ENCODE measurements at regions of chr14 and their contacts with region 1.

Region 1: GRCh38 chr14:57692671-57693070 is 173.2 kb downstream of the SLC35F4 start:
- DNase-seq: peak; percentile 56
- H3K4me3 ChIP-seq: no peak overlapping the region
- H3K27ac ChIP-seq: no peak overlapping the region
- H3K4me1 ChIP-seq: no peaks in the 10 kb centered on the region
- H3K27me3 ChIP-seq: peaks cover 8% of the 10 kb centered on the region

Region 2: GRCh38 chr14:57871459-57872080 is 178.9 kb after region 1 on chr14:
- in situ Hi-C with region 1: loop called (anchors 10 kb)
- DNase-seq: peak; percentile 86
- H3K4me3 ChIP-seq: no peak overlapping the region
- H3K27ac ChIP-seq: no peak overlapping the region
- H3K4me1 ChIP-seq: peaks cover 7% of the 10 kb centered on the region; the same call in 1 of the 2 replicates
- H3K27me3 ChIP-seq: peaks cover 30% of the 10 kb centered on the region

Region 3: GRCh38 chr14:57909626-57910025 is 217.0 kb after region 1 on chr14:
- in situ Hi-C with region 1: no loop called
- DNase-seq: no peak
- H3K4me3 ChIP-seq: no peak overlapping the region
- H3K27ac ChIP-seq: no peak overlapping the region
- H3K4me1 ChIP-seq: no peaks in the 10 kb centered on the region
- H3K27me3 ChIP-seq: peaks cover 4% of the 10 kb centered on the region; the same call in 1 of the 2 replicates

Region 4: GRCh38 chr14:58060077-58060476 is 367.4 kb after region 1 on chr14:
- in situ Hi-C with region 1: loop called (anchors 10 kb)
- DNase-seq: peak; percentile 26
- H3K4me3 ChIP-seq: no peak overlapping the region
- H3K27ac ChIP-seq: no peak overlapping the region
- H3K4me1 ChIP-seq: no peaks in the 10 kb centered on the region
- H3K27me3 ChIP-seq: no peaks in the 10 kb centered on the region